Dorsolateral prefrontal cortex (tissue), 120 donors: ENCODE measurements at regions of chr1 and their contacts with region 1.

Region 1: GRCh38 chr1:196897158-196897828 is 9.4 kb downstream of the CFHR4 start:
- DNase-seq: no peak
- H3K4me3 ChIP-seq: peak overlapping the region in 51 of 59 donors; percentile 1 to 56 (median 38)
- H3K27ac ChIP-seq: no peak overlapping the region
- H3K27me3 ChIP-seq: peaks cover 0 to 21% (median 0%) of the 10 kb centered on the region in 45 donors
- CTCF ChIP-seq: peak in 1 of 56 donors; percentile 11

Region 2: GRCh38 chr1:196567238-196567637 is 330.1 kb before region 1 on chr1:
- intact Hi-C with region 1: no loop called
- DNase-seq: no peak
- H3K4me3 ChIP-seq: no peak overlapping the region
- H3K27ac ChIP-seq: no peak overlapping the region
- H3K27me3 ChIP-seq: no peaks in the 10 kb centered on the region
- CTCF ChIP-seq: no peak

Region 3: DNA sequence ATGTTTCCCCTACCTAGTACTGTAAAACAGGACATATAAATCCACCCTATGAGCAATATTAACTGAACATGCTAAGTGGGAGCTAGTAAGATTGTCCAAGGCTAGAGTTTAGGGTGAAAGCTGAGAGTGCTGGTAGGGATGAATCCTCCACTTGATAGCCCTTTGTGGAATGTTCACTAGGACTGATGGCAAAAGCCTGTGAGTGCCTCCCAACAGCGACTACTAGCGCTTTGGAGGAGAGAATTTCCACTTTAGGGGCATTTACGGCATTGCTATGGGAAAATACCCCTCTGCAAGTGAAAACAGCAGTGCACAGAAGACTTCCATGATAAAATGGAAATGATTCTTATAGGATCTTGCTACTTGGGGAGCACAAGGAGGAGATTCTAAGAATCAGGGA is 115.9 kb after region 1 on chr1:
- intact Hi-C with region 1: no loop called
- DNase-seq: no peak
- H3K4me3 ChIP-seq: no peak overlapping the region
- H3K27ac ChIP-seq: no peak overlapping the region
- H3K27me3 ChIP-seq: no peaks in the 10 kb centered on the region
- CTCF ChIP-seq: no peak

Region 4: GRCh38 chr1:197103300-197103699 is 206.0 kb after region 1 on chr1:
- intact Hi-C with region 1: loop called in 1 of 2 experiments (anchors 5 kb)
- DNase-seq: peak in 1 of 10 donors; percentile 12
- H3K4me3 ChIP-seq: peak overlapping the region in 46 of 59 donors; percentile 1 to 53 (median 38)
- H3K27ac ChIP-seq: peak overlapping the region in 54 of 59 donors; percentile 0 to 84 (median 60)
- H3K27me3 ChIP-seq: no peaks in the 10 kb centered on the region
- CTCF ChIP-seq: no peak